ENCODE measurements at regions of chr7 and their contacts with region 1.

Region 1: GRCh38 chr7:43193893-43194292 is 81.4 kb downstream of the HECW1 start:
- DNase-seq: no peak
- ATAC-seq: no peak
- H3K4me3 ChIP-seq: no peak overlapping the region
- H3K27ac ChIP-seq: no peak overlapping the region
- H3K4me1 ChIP-seq: no peaks in the 10 kb centered on the region
- H3K27me3 ChIP-seq: peaks cover 0 to 26% (median 7%) of the 10 kb centered on the region in 7 donors
- CTCF ChIP-seq: no peak

Region 2: GRCh38 chr7:43248961-43249822 is 55.3 kb after region 1 on chr7:
- intact Hi-C with region 1: loop called in 1 of 10 experiments (anchors 10 kb)
- DNase-seq: no peak
- ATAC-seq: no peak
- H3K4me3 ChIP-seq: no peak overlapping the region
- H3K27ac ChIP-seq: no peak overlapping the region
- H3K4me1 ChIP-seq: no peaks in the 10 kb centered on the region
- H3K27me3 ChIP-seq: peaks cover 0 to 24% (median 5%) of the 10 kb centered on the region in 7 donors
- CTCF ChIP-seq: no peak

Region 3: DNA sequence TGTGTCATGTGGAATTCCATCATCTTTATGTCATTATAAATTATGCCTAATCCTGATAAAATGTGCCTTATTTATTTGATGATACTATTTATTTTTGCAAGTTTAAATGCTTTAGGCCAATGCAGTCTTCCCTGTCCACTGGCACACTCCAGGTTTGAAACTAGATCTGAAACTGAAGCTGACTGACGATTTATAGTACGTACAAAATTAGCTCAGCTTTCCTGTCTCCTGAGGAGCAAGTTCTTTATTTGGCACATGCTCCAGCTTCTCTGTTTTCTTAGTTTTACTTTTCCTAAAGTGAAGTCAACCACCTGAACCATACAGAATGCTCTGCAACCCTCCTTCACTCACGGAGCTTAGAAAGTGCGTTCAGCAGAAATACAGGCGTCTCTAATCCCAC is 82.7 kb after region 1 on chr7:
- intact Hi-C with region 1: no loop called
- DNase-seq: no peak
- ATAC-seq: no peak
- H3K4me3 ChIP-seq: no peak overlapping the region
- H3K27ac ChIP-seq: no peak overlapping the region
- H3K4me1 ChIP-seq: no peaks in the 10 kb centered on the region
- H3K27me3 ChIP-seq: peaks cover 0 to 16% (median 12%) of the 10 kb centered on the region in 7 donors
- CTCF ChIP-seq: no peak

Measured in heart right ventricle (tissue), 16 donors.